Common myeloid progenitor, CD34-positive (primary cell): ENCODE measurements at regions of chr19 and their contacts with region 1.

Region 1: DNA sequence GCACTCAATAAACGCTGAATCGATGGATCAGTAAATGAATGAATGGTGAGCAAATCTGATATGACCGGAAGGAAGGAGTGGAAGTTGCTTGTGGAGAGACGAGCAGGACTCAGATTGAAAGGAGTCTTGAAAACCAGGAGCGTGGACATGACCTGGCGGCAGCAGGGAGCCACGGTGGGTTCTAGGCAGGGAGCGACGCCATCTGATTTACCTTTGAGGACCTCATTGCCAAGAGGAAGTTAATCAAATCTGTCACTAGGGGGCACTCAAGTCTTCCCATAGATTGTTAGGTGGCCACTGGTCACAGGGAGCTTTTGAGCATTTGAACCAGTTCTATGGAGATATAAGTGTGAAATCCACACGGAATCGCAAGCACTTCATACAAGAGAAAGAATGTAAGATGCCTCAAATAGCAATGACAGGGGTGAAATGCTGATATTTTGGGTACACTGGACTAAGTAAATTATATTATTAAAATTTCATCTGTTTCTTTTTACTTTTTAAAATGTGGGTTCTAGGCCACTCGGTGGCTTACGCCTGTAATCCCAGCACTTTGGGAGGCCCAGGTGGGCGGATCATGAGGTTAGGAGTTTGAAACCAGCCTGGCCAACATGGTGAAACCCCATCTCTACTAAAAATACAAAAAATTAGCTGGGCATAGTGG is 9.2 kb upstream of the FBN3 start:
- DNase-seq: peak; percentile 81 to 91 (median 88)
- H3K4me3 ChIP-seq: no peak overlapping the region
- H3K27ac ChIP-seq: no peak overlapping the region
- H3K4me1 ChIP-seq: peaks cover 0 to 14% (median 8%) of the 10 kb centered on the region in 4 experiments
- H3K27me3 ChIP-seq: peaks cover 0 to under 1% (median 0%) of the 10 kb centered on the region in 5 experiments

Region 2: DNA sequence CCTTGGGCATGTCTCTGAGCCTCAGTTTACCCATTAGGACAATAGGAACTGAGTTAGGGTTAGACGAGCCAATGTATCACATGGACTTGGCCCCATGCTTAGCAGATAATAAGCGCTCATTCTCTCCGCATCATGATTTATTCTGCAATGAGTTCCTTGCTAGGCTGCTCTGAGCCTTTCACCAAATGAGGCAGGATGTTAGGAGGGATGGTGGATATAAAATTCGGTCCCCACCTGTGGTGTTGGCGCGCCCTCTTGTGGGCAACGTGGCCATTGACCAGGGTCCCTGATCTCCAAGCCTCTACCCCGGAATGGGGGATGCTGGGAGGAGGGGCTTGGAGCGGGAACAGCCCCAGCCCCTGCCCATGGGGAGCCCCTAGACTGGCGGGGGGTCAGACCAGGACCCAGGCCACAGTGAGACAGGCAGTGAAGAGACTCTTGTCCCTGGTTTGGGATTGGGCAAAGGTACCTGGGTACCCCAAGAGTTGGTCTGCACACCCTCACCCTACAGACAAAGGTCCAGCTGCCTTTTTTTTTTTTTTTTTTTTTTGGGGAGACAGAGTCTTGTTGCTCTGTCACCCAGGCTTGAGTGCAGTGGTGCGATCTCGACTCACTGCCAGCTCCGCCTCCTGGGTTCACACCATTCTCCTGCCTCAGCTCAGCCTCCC is 94.5 kb after region 1 on chr19:
- CTCF ChIA-PET with region 1: interaction called, 11 read pairs
- POLR2A ChIA-PET with region 1: no interaction called
- DNase-seq: peak; percentile 77 to 89 (median 84)
- H3K4me3 ChIP-seq: no peak overlapping the region
- H3K27ac ChIP-seq: no peak overlapping the region
- H3K4me1 ChIP-seq: no peaks in the 10 kb centered on the region
- H3K27me3 ChIP-seq: no peaks in the 10 kb centered on the region